ENCODE measurements at regions of chr3 and their contacts with region 1.

Region 1: DNA sequence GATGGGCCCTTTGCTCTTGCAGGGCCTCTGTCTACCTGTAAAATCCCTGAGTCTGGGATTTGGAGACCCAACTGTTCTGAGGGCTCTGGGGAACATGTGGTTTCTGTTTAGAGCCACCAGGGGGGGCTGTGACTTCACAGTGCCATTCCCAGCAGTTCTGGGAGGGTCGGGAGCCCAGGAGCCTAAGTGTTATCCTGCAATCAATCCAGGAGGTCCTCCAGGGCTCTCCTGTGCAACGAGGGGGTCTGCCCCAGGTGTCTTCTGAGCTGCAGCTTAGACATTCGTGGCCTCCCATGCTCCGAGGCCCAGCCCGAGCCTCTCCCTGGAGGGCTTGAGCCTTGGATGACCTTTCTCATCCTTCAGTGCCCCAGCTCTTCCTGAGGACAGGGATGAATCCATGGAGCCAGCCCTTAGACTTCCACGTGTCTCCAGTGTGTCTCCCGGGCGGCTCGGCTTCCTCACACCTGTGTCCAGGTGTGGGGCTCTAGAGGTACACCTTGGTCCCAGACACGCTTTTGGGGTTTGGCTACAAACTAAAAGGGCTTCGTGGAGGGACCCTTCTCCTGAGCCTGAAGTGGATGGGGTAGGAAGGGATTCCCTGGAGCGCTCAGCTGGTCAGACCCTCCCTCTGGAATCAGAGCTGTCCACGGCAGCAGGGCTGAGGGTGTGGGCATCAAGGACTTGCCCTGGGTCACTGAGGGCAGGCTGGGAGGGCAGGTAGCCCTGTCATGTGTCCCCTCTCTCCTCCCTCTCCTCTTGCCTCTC is 20.3 kb upstream of the ABTB1 start:
- DNase-seq: peak in 7 of 9 experiments; percentile 17 to 66 (median 51)
- ATAC-seq: peak; percentile 71
- H3K4me3 ChIP-seq: no peak overlapping the region
- H3K4me3 Mint-ChIP-seq: no peak overlapping the region
- H3K27ac ChIP-seq: no peak overlapping the region
- H3K27ac Mint-ChIP-seq: no peak overlapping the region
- H3K4me1 ChIP-seq: no peaks in the 10 kb centered on the region
- H3K4me1 Mint-ChIP-seq: no peaks in the 10 kb centered on the region
- H3K27me3 ChIP-seq: no peaks in the 10 kb centered on the region
- H3K27me3 Mint-ChIP-seq: peaks cover 2% of the 10 kb centered on the region
- CTCF ChIP-seq: peak; percentile 74

Region 2: DNA sequence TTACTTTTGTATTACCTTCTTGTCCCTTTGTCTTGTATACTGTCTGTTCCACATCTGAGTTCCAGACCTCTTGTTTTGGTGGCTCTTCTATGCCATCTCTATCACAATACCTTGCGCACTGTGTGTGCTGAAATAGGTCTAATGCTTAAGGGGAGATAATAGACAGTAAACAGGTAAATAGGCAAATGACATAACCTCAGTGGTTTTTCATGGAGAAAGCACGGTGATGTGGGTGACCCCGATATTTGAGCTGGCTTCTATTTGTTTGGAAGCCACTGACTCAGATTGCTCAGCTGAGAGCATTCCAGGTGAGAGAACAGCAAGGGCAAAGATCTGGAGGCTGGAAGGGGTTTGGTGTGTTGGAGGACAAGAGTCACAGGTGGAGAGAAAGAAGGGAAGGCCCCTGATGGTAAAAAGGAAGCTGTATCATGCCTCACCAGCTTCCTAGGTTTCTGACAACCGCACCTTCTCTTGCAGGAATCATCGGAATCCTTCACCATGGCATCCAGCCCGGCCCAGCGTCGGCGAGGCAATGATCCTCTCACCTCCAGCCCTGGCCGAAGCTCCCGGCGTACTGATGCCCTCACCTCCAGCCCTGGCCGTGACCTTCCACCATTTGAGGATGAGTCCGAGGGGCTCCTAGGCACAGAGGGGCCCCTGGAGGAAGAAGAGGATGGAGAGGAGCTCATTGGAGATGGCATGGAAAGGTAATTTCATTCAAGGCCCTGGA is 53.4 kb before region 1 on chr3:
- CTCF ChIA-PET with region 1: no interaction called
- POLR2A ChIA-PET with region 1: no interaction called
- intact Hi-C with region 1: no loop called
- DNase-seq: no peak
- ATAC-seq: no peak
- H3K4me3 ChIP-seq: peak overlapping the region; percentile 53 to 60
- H3K4me3 Mint-ChIP-seq: peak overlapping the region; percentile 78
- H3K27ac ChIP-seq: peak overlapping the region; percentile 53 to 69
- H3K27ac Mint-ChIP-seq: peak overlapping the region; percentile 76
- H3K4me1 ChIP-seq: peaks cover 11% of the 10 kb centered on the region
- H3K4me1 Mint-ChIP-seq: peaks cover 15% of the 10 kb centered on the region
- H3K27me3 ChIP-seq: no peaks in the 10 kb centered on the region
- H3K27me3 Mint-ChIP-seq: no peaks in the 10 kb centered on the region
- CTCF ChIP-seq: no peak

Region 3: GRCh38 chr3:127637546-127637945 is 14.9 kb before region 1 on chr3:
- CTCF ChIA-PET with region 1: interaction called, 14 read pairs
- POLR2A ChIA-PET with region 1: no interaction called
- intact Hi-C with region 1: no loop called
- DNase-seq: peak in 2 of 9 experiments; percentile 43 to 69
- ATAC-seq: peak; percentile 80
- H3K4me3 ChIP-seq: no peak overlapping the region
- H3K4me3 Mint-ChIP-seq: no peak overlapping the region
- H3K27ac ChIP-seq: peak overlapping the region in 1 of 2 experiments; percentile 4
- H3K27ac Mint-ChIP-seq: no peak overlapping the region
- H3K4me1 ChIP-seq: peaks cover 7% of the 10 kb centered on the region
- H3K4me1 Mint-ChIP-seq: peaks cover 6% of the 10 kb centered on the region
- H3K27me3 ChIP-seq: no peaks in the 10 kb centered on the region
- H3K27me3 Mint-ChIP-seq: peaks cover 17% of the 10 kb centered on the region
- CTCF ChIP-seq: no peak

Region 4: DNA sequence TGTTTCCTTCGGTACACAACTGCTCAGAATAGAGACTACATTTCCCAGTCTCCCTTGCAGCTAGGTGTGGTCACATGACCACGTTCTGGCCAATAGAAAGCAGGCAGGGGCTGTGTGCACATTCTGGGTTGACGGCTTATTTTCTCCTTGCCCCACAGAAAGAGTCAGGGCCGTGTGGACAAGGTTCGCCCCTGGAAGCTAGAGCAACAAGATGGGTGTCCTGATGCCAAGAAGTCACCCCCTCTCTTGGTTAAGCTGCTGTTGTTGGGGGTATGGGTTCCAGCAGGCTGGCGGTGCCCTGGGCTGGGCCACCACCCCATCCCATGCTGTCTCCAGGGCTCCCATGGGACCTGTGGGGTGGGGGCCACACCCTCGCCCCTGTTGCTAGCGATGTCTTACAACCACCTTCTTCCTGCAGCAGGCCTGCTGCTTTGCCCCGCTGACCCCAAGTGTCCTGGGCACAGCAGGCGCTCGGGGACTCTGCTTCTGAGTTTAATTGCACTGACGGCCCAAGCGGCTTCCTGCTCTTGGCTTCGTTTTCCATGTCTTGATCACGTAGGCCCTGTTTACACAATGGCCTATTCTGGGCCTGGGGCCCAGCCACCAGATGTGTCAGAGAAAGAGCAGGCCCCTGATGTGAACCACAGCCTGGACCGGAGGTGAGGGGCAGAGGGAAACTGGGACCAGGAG is 45.3 kb after region 1 on chr3:
- CTCF ChIA-PET with region 1: interaction called, 19 read pairs
- POLR2A ChIA-PET with region 1: no interaction called
- intact Hi-C with region 1: loop called in 1 of 2 experiments (anchors 1 kb)
- DNase-seq: peak in 6 of 9 experiments; percentile 13 to 70 (median 46)
- ATAC-seq: peak; percentile 77
- H3K4me3 ChIP-seq: no peak overlapping the region
- H3K4me3 Mint-ChIP-seq: no peak overlapping the region
- H3K27ac ChIP-seq: no peak overlapping the region
- H3K27ac Mint-ChIP-seq: no peak overlapping the region
- H3K4me1 ChIP-seq: no peaks in the 10 kb centered on the region
- H3K4me1 Mint-ChIP-seq: peaks cover 7% of the 10 kb centered on the region
- H3K27me3 ChIP-seq: no peaks in the 10 kb centered on the region
- H3K27me3 Mint-ChIP-seq: no peaks in the 10 kb centered on the region
- CTCF ChIP-seq: no peak

Region 5: GRCh38 chr3:127831723-127832172 is 179.3 kb after region 1 on chr3:
- CTCF ChIA-PET with region 1: interaction called, 4 read pairs
- POLR2A ChIA-PET with region 1: no interaction called
- intact Hi-C with region 1: loop called in 1 of 2 experiments (anchors 5 kb)
- DNase-seq: peak in 5 of 9 experiments; percentile 25 to 54 (median 35)
- ATAC-seq: no peak
- H3K4me3 ChIP-seq: no peak overlapping the region
- H3K4me3 Mint-ChIP-seq: no peak overlapping the region
- H3K27ac ChIP-seq: no peak overlapping the region
- H3K27ac Mint-ChIP-seq: no peak overlapping the region
- H3K4me1 ChIP-seq: no peaks in the 10 kb centered on the region
- H3K4me1 Mint-ChIP-seq: no peaks in the 10 kb centered on the region
- H3K27me3 ChIP-seq: no peaks in the 10 kb centered on the region
- H3K27me3 Mint-ChIP-seq: peaks cover 5% of the 10 kb centered on the region
- CTCF ChIP-seq: peak; percentile 29

Region 6: DNA sequence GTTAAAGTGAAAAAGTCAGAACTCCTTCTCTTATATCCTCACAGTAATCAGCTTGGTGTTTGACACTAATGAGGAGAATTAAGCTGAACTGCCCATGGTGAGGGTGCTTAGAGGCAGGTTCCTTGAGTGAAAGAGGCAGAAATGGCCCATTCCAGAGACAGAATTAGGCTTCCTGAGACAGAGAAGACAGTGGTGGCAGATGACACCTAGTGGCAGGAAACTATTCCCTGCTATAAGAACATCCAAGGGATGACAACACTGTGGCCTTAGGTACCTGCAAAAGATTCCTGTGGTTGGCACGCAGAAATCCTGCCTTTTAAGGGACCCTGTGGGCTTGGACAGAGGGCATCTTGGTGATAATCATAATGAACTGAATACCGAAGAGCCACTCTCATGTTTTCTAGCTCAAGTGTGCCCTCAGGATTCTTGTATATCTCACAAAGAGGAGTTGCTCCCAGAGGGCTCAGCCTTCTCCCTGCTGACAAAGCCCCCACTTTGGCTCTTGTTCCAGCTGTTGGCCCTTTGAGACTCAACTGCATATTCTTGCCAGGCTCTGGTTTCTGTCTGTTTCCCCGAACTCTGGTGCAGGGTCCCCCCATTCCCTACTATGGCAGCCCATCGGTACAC is 318.7 kb after region 1 on chr3:
- CTCF ChIA-PET with region 1: interaction called, 14 read pairs
- POLR2A ChIA-PET with region 1: no interaction called
- intact Hi-C with region 1: loop called in 1 of 2 experiments (anchors 1 kb)
- DNase-seq: peak in 2 of 9 experiments; percentile 38 to 54
- ATAC-seq: no peak
- H3K4me3 ChIP-seq: no peak overlapping the region
- H3K4me3 Mint-ChIP-seq: no peak overlapping the region
- H3K27ac ChIP-seq: no peak overlapping the region
- H3K27ac Mint-ChIP-seq: no peak overlapping the region
- H3K4me1 ChIP-seq: no peaks in the 10 kb centered on the region
- H3K4me1 Mint-ChIP-seq: no peaks in the 10 kb centered on the region
- H3K27me3 ChIP-seq: no peaks in the 10 kb centered on the region
- H3K27me3 Mint-ChIP-seq: peaks cover 4% of the 10 kb centered on the region
- CTCF ChIP-seq: peak; percentile 40